Sciatic nerve (tissue), 2 donors: ENCODE measurements at regions of chr11 and their contacts with region 1.

Region 1: GRCh38 chr11:124543145-124543544 is 309 bp downstream of the OR8B12 start:
- DNase-seq: no peak
- ATAC-seq: no peak

Region 2: GRCh38 chr11:124394408-124394807 is 148.7 kb before region 1 on chr11:
- intact Hi-C with region 1: loop called (anchors 5 kb)
- DNase-seq: no peak
- ATAC-seq: no peak